Mammary epithelial cell (primary cell): ENCODE measurements at regions of chr11 and their contacts with region 1.

Region 1: DNA sequence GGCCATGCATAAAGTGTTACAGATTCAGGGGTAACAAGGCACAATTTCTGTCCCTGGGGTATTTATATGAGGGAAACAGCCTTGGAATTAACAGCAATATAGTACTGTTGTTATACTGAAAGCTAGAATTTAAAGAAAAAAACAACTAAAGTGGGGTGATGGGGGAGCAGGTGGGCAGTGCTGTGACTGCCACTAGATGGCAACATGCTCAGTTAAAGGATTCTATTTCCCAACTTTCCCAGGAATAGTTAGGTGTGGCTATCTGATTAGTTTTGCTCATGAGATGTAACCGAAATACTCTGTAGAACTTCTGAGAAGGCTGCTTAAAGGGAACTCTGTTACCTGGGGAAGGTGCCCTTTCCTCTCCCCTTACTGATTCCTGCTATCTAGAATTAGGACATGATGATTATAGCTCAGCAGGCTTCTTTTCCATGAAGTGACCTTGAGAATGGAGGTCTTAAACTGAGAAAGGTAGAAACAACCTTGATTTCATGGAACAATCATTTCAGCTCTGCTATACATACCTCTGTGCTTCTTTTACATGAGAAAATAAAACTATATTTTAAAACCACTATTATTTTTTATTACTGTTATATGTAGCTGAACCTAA is 102.6 kb downstream of the RELT start:
- DNase-seq: peak; percentile 51
- H3K4me3 ChIP-seq: no peak overlapping the region
- H3K27ac ChIP-seq: peak overlapping the region; percentile 3
- H3K4me1 ChIP-seq: peaks cover 6% of the 10 kb centered on the region
- H3K27me3 ChIP-seq: no peaks in the 10 kb centered on the region
- CTCF ChIP-seq: peak; percentile 91 to 96

Region 2: GRCh38 chr11:73360336-73361013 is 118.4 kb before region 1 on chr11:
- CTCF ChIA-PET with region 1: no interaction called
- dilution Hi-C with region 1: no loop called
- in situ Hi-C with region 1: no loop called
- intact Hi-C with region 1: no loop called
- DNase-seq: no peak
- H3K4me3 ChIP-seq: no peak overlapping the region
- H3K27ac ChIP-seq: no peak overlapping the region
- H3K4me1 ChIP-seq: peaks cover 7% of the 10 kb centered on the region
- H3K27me3 ChIP-seq: no peaks in the 10 kb centered on the region
- CTCF ChIP-seq: peak; percentile 29 to 33

Region 3: GRCh38 chr11:73429121-73429750 is 49.6 kb before region 1 on chr11:
- CTCF ChIA-PET with region 1: no interaction called
- dilution Hi-C with region 1: no loop called
- in situ Hi-C with region 1: no loop called
- intact Hi-C with region 1: no loop called
- DNase-seq: no peak
- H3K4me3 ChIP-seq: no peak overlapping the region
- H3K27ac ChIP-seq: no peak overlapping the region
- H3K4me1 ChIP-seq: peaks cover under 1% of the 10 kb centered on the region
- H3K27me3 ChIP-seq: no peaks in the 10 kb centered on the region
- CTCF ChIP-seq: no peak

Region 4: DNA sequence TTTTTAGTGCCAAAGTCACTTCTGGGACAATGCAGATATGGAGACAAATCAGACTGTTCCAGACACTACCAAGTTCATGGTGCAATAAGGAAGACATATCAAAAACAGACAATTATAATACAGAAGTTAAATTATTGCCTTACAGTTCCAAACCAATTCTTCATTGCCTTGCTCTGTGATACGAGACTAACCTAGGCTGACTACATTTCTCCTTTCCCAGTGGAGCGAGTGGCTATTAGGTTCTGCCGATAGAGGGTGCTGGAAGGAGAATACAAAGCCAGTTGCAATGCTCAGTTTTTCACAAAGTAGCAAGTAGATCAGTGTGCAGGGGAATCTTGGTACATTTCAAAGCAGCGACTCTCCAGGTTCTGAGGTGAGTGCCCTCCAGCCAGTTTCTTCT is 51.3 kb after region 1 on chr11:
- CTCF ChIA-PET with region 1: no interaction called
- dilution Hi-C with region 1: no loop called
- in situ Hi-C with region 1: no loop called
- intact Hi-C with region 1: loop called (anchors 2 kb)
- DNase-seq: no peak
- H3K4me3 ChIP-seq: no peak overlapping the region
- H3K27ac ChIP-seq: no peak overlapping the region
- H3K4me1 ChIP-seq: peaks cover 22% of the 10 kb centered on the region
- H3K27me3 ChIP-seq: no peaks in the 10 kb centered on the region
- CTCF ChIP-seq: peak; percentile 22 to 51

Region 5: GRCh38 chr11:73597956-73598718 is 119.3 kb after region 1 on chr11 and contains the start of gene FAM168A:
- CTCF ChIA-PET with region 1: no interaction called
- dilution Hi-C with region 1: no loop called
- in situ Hi-C with region 1: no loop called
- intact Hi-C with region 1: loop called (anchors 1 kb)
- DNase-seq: peak; percentile 98
- H3K4me3 ChIP-seq: peak within 1 kb of the TSS; percentile 68 to 100 (median 75)
- H3K27ac ChIP-seq: peak within 1 kb of the TSS; percentile 48
- H3K4me1 ChIP-seq: peaks cover 8% of the 10 kb centered on the region
- H3K27me3 ChIP-seq: no peaks in the 10 kb centered on the region
- CTCF ChIP-seq: peak; percentile 5 to 31
- total RNA-seq, gene FAM168A: 28.2 to 33.4 TPM

Region 6: GRCh38 chr11:73625696-73626318 is 147.0 kb after region 1 on chr11:
- CTCF ChIA-PET with region 1: no interaction called
- dilution Hi-C with region 1: no loop called
- in situ Hi-C with region 1: no loop called
- intact Hi-C with region 1: loop called (anchors 1 kb)
- DNase-seq: peak; percentile 61
- H3K4me3 ChIP-seq: no peak overlapping the region
- H3K27ac ChIP-seq: no peak overlapping the region
- H3K4me1 ChIP-seq: peaks cover 3% of the 10 kb centered on the region
- H3K27me3 ChIP-seq: no peaks in the 10 kb centered on the region
- CTCF ChIP-seq: peak; percentile 90